AG04450 (cell line): ENCODE measurements at regions of chr6 and their contacts with region 1.

Region 1: DNA sequence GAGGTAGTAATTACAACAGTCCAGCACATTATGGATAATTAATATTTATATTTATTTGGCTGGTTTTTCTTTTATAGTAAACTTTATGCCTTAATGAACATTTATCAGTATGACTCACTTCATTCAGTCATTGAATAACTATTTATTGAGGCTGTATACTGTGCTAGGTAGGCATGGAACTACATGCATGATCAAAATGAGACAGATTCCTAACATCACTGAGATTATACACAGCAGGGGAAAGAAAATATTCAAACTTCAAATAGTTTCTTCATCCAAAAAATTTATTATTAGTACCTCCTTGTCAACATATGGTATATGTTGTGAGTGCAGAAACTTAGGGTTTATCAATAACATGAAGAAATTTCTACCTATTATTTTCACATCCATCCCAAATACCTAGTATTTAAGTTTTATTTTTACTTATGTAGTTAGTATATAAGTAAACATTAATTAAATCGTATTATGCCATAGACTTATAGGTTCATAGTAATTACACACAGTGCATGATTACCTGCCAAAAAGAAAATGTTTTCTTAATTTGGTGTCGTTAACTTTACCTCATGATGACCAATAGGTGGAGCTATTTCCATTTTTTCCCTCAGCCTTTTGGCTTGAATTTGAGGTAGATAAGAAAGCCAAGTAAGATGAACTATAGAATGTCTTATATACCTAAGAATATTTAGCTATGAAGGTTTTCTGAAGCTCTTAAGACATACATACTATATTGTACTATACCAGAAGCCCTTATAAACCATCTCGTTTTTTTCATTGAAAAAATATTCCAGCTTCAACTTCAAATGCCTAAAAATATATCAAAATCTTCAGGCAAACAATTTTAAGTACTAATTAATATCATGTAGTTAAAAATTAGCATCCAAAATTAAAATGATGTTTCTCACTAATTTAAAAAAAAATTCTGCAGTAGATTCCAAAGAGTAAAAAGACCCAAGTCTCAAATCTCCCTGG is 12.5 kb upstream of the TMEM30A start:
- DNase-seq: no peak
- H3K4me3 ChIP-seq: no peak overlapping the region
- H3K27ac ChIP-seq: no peak overlapping the region
- H3K27me3 ChIP-seq: no peaks in the 10 kb centered on the region
- CTCF ChIP-seq: peak; percentile 73

Region 2: DNA sequence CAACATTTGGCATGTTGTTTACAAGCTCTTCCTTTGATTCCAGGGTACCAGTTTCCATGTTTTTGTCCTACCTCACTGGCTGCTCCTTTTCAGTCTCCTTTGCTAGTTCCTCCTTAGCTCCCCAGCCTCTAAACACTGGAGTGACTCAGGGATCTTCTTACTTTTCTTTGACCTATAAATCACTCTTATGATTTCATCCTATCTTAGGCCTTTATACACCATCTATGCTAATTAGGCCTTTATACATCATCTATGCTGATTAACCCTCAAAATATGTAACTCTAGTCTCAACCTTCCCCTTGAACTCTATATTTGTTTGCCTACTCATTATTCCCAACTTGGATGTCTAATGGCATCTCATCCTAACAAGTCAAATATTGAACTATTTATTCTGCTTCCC is 22.0 kb before region 1 on chr6:
- CTCF ChIA-PET with region 1: interaction called, 10 read pairs
- POLR2A ChIA-PET with region 1: no interaction called
- DNase-seq: peak; percentile 70
- H3K4me3 ChIP-seq: no peak overlapping the region
- H3K27ac ChIP-seq: no peak overlapping the region
- H3K27me3 ChIP-seq: no peaks in the 10 kb centered on the region
- CTCF ChIP-seq: no peak

Region 3: GRCh38 chr6:75317503-75318206 is 20.6 kb after region 1 on chr6:
- CTCF ChIA-PET with region 1: interaction called, 10 read pairs
- POLR2A ChIA-PET with region 1: no interaction called
- DNase-seq: no peak
- H3K4me3 ChIP-seq: no peak overlapping the region
- H3K27ac ChIP-seq: no peak overlapping the region
- H3K27me3 ChIP-seq: no peaks in the 10 kb centered on the region
- CTCF ChIP-seq: no peak

Region 4: DNA sequence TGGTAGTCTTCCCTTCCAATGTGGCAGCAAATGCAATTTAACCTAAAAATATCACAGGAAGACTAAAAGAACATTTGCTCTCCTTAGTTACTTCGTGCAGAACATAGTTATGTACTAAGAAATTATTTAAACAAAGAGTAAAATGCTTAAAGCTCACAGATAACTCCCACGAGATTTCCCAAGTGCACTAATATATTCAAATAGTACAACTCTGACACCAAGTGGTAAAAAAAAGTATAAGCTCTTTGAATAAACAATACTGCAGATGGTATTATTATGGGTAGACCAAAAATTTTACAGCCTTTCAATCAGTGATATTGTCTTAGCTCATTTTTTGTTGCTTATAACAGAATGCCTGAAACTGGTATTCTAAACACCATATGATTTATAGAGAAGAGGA is 249.3 kb after region 1 on chr6:
- CTCF ChIA-PET with region 1: interaction called, 14 read pairs
- POLR2A ChIA-PET with region 1: no interaction called
- DNase-seq: no peak
- H3K4me3 ChIP-seq: no peak overlapping the region
- H3K27ac ChIP-seq: no peak overlapping the region
- H3K27me3 ChIP-seq: no peaks in the 10 kb centered on the region
- CTCF ChIP-seq: peak; percentile 31

Region 5: DNA sequence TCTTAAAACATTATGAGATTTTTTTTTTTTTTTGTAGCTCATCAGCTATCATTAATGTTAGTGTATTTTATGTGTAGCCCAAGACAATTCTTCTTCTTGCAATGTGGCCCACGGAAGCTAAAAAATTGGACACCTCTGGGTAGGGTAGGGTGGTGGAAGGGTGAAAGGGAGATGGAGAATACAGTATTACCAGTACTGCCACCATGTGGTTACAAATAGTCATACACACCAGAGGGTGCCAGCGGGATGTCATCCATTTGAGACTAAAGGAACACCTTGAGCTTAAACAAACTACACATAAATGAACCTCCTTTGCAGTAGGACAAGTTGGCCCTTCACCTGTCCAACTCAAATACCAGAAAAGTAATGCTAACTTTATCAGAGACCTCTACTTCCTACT is 1564.3 kb after region 1 on chr6:
- CTCF ChIA-PET with region 1: no interaction called
- POLR2A ChIA-PET with region 1: no interaction called
- DNase-seq: no peak
- H3K4me3 ChIP-seq: no peak overlapping the region
- H3K27ac ChIP-seq: no peak overlapping the region
- H3K27me3 ChIP-seq: no peaks in the 10 kb centered on the region
- CTCF ChIP-seq: no peak